A549 (cell line): ENCODE measurements at regions of chr2 and their contacts with region 1.

Region 1: GRCh38 chr2:191677646-191678436 is at the start of gene NABP1:
- DNase-seq: peak; percentile 74 to 97
- ATAC-seq: peak; percentile 89 to 93
- H3K4me3 ChIP-seq: peak within 1 kb of the TSS; percentile 71
- H3K27ac ChIP-seq: peak within 1 kb of the TSS; percentile 83 to 90
- H3K4me1 ChIP-seq: peaks cover 41% of the 10 kb centered on the region
- CTCF ChIP-seq: no peak
- EP300 ChIP-seq: no peak
- POLR2A ChIP-seq: peak; percentile 99
- RAD21 ChIP-seq: 0 out of 5 replicates have a peak, but pooled peaks of 1 of the 2 experiments have one; percentile 29
- polyA plus RNA-seq, gene NABP1: 13.6 and 22.4 TPM in 2 replicates

Region 2: GRCh38 chr2:191421950-191422349 is 255.9 kb before region 1 on chr2:
- CTCF ChIA-PET with region 1: no interaction called
- POLR2A ChIA-PET with region 1: no interaction called
- DNase-seq: no peak
- ATAC-seq: no peak
- H3K4me3 ChIP-seq: no peak overlapping the region
- H3K27ac ChIP-seq: no peak overlapping the region
- H3K4me1 ChIP-seq: peaks cover 9% of the 10 kb centered on the region; the same call in 2 of the 3 replicates
- CTCF ChIP-seq: no peak
- EP300 ChIP-seq: no peak
- POLR2A ChIP-seq: no peak
- RAD21 ChIP-seq: no peak

Region 3: DNA sequence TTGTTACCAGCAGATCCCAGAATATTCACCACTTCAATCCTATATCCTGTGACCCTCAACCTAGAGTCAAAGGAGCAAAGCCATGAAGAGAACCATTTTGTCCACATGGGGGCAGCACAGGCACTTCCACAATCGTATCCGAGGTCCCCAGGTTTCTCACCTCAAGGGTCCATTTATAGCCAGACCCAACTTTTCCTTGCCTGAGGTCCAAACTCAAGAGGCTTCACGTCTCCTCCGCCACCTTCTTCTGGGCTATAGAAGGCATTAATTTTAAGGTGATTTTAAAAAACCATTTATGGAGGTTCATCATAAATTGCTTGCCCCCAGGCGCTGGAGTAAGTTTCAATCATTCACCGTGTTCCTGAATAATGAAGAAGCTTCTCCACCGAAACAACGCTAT is 111.5 kb before region 1 on chr2:
- CTCF ChIA-PET with region 1: interaction called, 9 read pairs
- POLR2A ChIA-PET with region 1: interaction called, 29 read pairs
- DNase-seq: peak; percentile 61 to 67
- ATAC-seq: peak; percentile 82 to 92
- H3K4me3 ChIP-seq: no peak overlapping the region
- H3K27ac ChIP-seq: peak overlapping the region in 1 of 2 experiments; percentile 49; a peak in 2 of 6 replicates
- H3K4me1 ChIP-seq: peaks cover 7% of the 10 kb centered on the region
- CTCF ChIP-seq: peak; percentile 89
- EP300 ChIP-seq: no peak
- POLR2A ChIP-seq: no peak
- RAD21 ChIP-seq: peak; percentile 84 to 85

Region 4: GRCh38 chr2:191611614-191612013 is 66.2 kb before region 1 on chr2:
- CTCF ChIA-PET with region 1: no interaction called
- POLR2A ChIA-PET with region 1: interaction called, 10 read pairs
- DNase-seq: no peak
- ATAC-seq: 0 out of 6 replicates have a peak, but pooled peaks of 1 of the 2 experiments have one; percentile 24
- H3K4me3 ChIP-seq: no peak overlapping the region
- H3K27ac ChIP-seq: peak overlapping the region in 1 of 2 experiments; percentile 57; a peak in 3 of 6 replicates
- H3K4me1 ChIP-seq: peaks cover 17% of the 10 kb centered on the region
- CTCF ChIP-seq: no peak
- EP300 ChIP-seq: no peak
- POLR2A ChIP-seq: no peak
- RAD21 ChIP-seq: no peak

Region 5: GRCh38 chr2:191660575-191661388 is 17.1 kb before region 1 on chr2:
- CTCF ChIA-PET with region 1: no interaction called
- POLR2A ChIA-PET with region 1: interaction called, 23 read pairs
- DNase-seq: no peak
- ATAC-seq: no peak
- H3K4me3 ChIP-seq: no peak overlapping the region
- H3K27ac ChIP-seq: no peak overlapping the region
- H3K4me1 ChIP-seq: no peaks in the 10 kb centered on the region
- CTCF ChIP-seq: no peak
- EP300 ChIP-seq: no peak
- POLR2A ChIP-seq: no peak
- RAD21 ChIP-seq: no peak

Region 6: DNA sequence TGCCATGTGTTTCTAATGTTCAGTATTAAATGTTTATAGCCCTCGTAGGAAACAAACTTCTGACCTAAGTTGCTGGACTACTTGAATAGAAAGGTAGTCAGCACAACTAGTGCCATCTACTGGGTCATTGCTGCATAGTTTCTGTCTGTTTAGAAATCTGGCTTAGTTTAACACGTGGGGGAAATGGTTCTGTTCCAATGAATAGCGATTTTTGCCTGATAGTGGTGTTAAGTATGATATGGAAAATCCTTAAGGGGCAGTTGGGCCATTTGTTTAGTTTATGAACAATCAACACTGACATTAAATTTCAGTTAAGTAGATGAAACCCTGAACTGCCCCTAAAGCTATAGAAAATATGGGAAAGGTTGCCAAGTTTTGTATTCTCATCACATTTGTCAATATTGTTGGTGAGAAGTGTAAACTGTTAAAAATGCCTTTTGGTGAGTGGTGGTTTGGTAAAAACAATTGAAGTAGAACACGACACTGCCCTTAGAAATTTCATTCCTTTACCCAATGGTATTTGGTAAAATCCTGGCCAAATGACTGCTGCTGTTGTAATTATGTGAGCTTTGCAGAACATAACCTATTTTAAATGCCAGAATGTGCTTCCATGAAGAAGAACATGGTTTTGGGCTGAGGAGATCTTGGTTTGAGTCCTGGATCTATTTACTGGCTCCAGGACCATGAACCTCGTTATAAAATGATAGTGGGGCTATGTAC is 13.3 kb after region 1 on chr2:
- CTCF ChIA-PET with region 1: interaction called, 6 read pairs
- POLR2A ChIA-PET with region 1: interaction called, 18 read pairs
- DNase-seq: peak; percentile 68 to 81
- ATAC-seq: peak; percentile 72 to 76
- H3K4me3 ChIP-seq: no peak overlapping the region
- H3K27ac ChIP-seq: peak overlapping the region; percentile 29 to 69; a peak in 2 of 6 replicates
- H3K4me1 ChIP-seq: peaks cover 47% of the 10 kb centered on the region
- CTCF ChIP-seq: peak; percentile 84
- EP300 ChIP-seq: no peak
- POLR2A ChIP-seq: no peak
- RAD21 ChIP-seq: peak; percentile 83 to 84